ENCODE measurements at regions of chrX and their contacts with region 1.

Region 1: GRCh38 chrX:109856974-109857373 is 123.9 kb upstream of the ACSL4 start:
- DNase-seq: no peak
- H3K4me3 ChIP-seq: peak overlapping the region in 1 of 4 donors; percentile 16
- H3K27ac ChIP-seq: peak overlapping the region in 3 of 4 donors; percentile 37 to 65 (median 42)
- H3K4me1 ChIP-seq: peaks cover 0 to 14% (median 0%) of the 10 kb centered on the region in 3 donors
- H3K27me3 ChIP-seq: no peaks in the 10 kb centered on the region
- CTCF ChIP-seq: peak; percentile 48 to 80 (median 70)
- POLR2A ChIP-seq: no peak

Region 2: DNA sequence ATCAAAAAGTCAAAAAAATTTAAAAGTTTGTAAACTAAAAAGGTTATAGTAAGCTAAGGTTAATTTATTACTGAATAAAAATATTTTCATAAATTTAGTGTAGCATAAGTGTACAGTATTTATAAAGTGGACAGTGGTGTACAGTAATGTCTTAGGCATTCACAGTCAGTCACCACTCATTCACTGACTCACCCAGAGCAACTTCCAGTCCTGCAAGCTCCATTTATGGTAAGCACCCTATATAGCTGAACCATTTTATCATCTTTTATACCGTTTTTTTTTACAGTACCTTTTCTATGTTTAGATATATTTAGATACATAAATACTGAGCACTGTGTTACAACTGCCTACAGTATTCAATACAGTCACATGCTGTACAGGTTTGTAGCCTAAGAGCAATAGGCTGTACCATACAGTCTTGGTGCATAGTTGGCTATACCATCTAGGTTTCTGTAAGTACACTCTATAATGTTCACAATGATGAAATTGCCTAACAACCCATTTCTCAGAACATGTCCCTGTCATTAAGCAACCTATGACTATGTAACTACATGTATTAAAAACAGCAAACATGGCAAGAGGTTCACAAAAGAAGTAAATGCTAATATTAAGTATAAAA is 142.5 kb before region 1 on chrX:
- intact Hi-C with region 1: loop called (anchors 10 kb)
- DNase-seq: no peak
- H3K4me3 ChIP-seq: no peak overlapping the region
- H3K27ac ChIP-seq: no peak overlapping the region
- H3K4me1 ChIP-seq: peaks cover 0 to 49% (median 3%) of the 10 kb centered on the region in 3 donors
- H3K27me3 ChIP-seq: no peaks in the 10 kb centered on the region
- CTCF ChIP-seq: no peak
- POLR2A ChIP-seq: no peak